ENCODE measurements at regions of chr15 and their contacts with region 1.

Region 1: GRCh38 chr15:45457641-45458433 is 64.7 kb downstream of the SLC30A4 start:
- H3K4me3 Mint-ChIP-seq: peak overlapping the region; percentile 49
- H3K27ac Mint-ChIP-seq: peak overlapping the region; percentile 78
- H3K4me1 Mint-ChIP-seq: peaks cover 48% of the 10 kb centered on the region
- H3K27me3 Mint-ChIP-seq: no peaks in the 10 kb centered on the region

Region 2: DNA sequence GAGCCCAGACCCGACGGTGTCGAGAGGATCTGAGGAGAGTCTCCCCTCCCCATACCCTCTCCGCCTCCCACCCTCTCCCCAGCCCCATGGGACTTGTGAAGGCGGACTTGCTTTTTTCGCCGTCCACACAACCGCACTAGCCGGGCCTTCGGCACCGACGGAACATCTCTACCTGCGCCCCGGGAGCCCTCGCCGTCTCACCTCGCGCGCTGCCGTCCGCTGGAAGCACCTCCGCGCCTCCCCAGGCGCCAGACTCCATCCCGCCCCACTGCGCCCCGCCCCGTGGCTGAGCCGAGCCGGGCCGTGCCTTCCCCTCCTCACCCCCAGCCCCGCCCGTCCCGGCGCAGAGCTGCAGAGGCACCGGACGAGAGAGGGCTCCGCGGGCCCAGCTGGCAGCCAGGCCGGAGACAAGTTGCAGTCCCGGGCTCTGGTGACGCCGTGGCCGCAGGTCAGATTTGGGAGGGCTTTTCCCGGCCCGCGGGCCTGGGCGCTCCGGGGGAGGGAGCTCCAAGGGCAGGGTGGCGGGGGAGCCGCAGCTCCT is 328.1 kb before region 1 on chr15 and contains the starts of genes DUOX1 and DUOXA1:
- intact Hi-C with region 1: no loop called
- H3K4me3 Mint-ChIP-seq: peak within 1 kb of the TSS; percentile 77
- H3K27ac Mint-ChIP-seq: peak within 1 kb of the TSS; percentile 52
- H3K4me1 Mint-ChIP-seq: peaks cover 27% of the 10 kb centered on the region
- H3K27me3 Mint-ChIP-seq: peaks cover 89% of the 10 kb centered on the region

Region 3: DNA sequence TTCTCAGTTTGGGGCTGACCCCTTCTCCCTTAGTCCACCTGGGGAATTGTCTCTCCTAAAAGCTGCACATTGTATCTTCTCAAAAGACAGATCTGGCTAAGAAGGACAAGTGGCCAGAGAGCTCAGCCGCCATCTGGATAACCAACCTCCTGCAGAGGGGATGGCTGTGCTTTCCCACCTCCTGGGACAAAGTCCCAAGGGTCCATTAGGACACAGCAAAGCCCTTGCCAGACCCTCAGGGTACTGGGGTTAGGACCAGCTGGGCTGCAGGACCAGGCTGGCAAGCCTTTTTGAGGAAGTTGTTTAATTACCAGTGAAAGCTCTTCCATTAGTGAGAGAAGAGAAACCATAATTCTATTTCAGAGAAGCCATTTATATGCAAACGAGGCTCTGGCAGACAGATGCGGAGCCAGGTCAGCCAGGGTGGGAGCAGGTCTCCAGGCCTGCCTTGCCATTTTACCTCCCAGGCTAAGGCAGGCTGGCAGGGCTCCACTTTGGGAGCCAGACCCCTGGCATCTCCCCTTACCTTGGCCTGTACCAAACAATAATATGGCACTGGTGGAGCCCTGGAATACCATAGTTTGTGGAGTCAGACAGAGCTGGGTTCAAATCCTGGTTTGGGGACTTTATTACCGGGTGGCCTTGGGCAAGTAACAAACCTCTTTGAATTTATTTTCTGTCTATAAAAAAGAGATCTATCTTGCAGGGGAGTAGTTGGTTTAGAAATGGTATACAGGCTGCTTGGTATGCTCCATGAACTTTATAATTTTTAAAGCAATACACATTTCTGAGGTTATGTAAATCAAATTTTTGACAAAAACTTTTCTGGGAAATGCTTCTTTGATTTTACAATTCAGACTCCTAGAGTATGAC is 288.0 kb before region 1 on chr15:
- intact Hi-C with region 1: no loop called
- H3K4me3 Mint-ChIP-seq: no peak overlapping the region
- H3K27ac Mint-ChIP-seq: peak overlapping the region; percentile 85
- H3K4me1 Mint-ChIP-seq: peaks cover 41% of the 10 kb centered on the region
- H3K27me3 Mint-ChIP-seq: peaks cover 1% of the 10 kb centered on the region

Region 4: GRCh38 chr15:45402162-45402954 is 55.5 kb before region 1 on chr15:
- intact Hi-C with region 1: loop called (anchors 1 kb)
- H3K4me3 Mint-ChIP-seq: peak overlapping the region; percentile 95
- H3K27ac Mint-ChIP-seq: peak overlapping the region; percentile 92
- H3K4me1 Mint-ChIP-seq: peaks cover 35% of the 10 kb centered on the region
- H3K27me3 Mint-ChIP-seq: no peaks in the 10 kb centered on the region

Region 5: DNA sequence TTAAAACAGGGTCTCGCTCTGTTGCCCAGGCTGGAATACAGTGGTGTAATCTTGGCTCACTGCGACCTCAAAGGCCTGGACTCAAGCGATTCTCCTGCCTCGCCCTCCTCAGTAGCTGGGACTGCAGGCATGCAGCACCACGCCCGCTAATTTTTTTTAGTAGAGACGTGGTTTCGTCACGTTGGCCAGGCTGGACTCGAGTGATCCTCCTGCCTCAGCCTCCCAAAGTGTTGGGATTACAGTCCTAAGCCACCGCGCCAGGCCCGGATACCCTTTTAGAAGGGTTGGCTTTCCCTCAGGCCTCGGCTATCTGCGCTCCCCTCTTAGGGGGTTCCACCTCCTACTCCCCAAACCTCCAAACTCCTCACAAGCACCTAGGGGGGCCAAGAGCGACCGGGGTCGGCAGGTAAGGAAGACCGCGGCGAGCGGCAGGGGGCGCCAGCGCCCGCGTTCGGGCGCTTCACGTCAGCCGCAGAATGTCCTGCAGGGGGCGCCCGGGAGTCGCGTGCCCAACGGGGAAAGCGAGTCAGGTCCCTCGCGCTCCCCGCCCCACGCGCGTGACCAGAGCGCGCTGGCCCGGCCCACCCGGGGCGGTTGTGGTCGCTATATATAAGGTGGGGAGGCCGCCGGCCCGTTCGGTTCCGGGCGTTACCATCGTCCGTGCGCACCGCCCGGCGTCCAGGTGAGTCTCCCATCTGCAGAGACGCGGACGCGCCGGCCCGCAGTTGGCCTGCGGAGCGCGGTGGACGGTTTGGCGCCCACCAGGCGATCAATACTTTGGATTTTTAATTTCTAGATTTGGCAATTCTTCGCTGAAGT is 27.7 kb before region 1 on chr15:
- intact Hi-C with region 1: loop called (anchors 1 kb)
- H3K4me3 Mint-ChIP-seq: peak overlapping the region; percentile 69
- H3K27ac Mint-ChIP-seq: peak overlapping the region; percentile 20
- H3K4me1 Mint-ChIP-seq: peaks cover 14% of the 10 kb centered on the region
- H3K27me3 Mint-ChIP-seq: peaks cover 3% of the 10 kb centered on the region

Region 6: DNA sequence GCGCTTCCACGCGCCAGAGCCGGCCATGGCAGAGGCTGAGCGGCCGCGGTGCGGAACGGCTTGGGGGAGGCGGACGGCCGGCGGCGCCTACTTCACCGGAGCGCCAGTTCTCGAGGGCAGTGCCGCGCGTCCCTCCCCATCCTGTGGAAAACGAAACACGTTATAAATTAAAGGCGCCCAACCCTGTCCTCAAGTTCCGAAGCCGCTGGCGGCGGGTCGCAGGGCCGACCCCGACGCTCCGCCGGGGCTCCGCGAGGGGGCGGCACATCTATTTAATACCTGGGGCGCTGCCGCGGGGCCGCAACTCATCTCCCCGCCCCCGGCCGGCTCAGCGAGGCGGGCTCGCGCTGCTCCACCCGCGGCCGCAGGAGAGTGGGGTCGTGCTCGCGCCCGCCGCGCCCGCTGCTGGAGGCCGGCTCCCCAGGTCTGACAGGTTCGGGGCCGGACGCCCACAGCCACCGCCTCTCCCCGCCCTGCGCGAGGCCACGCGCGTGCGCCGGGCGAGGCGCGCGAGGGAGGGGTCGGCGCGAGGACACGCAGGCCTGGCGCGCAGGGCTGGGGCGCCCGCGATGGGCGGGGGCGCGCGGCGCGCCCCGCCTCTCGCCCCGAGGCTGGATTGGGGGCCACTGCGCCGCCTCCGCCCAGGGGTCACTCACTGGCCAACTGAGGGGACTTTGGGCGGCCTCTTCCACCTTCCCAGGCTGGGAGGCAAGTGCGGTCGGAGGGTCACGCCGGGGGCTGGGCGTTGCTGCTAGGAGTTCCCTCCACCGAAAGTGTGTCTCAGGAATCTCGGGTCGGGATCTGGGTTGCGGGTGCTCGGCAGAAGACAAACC is 64.7 kb after region 1 on chr15 and contains the start of gene SLC30A4:
- intact Hi-C with region 1: loop called (anchors 2 kb)
- H3K4me3 Mint-ChIP-seq: peak within 1 kb of the TSS; percentile 87
- H3K27ac Mint-ChIP-seq: peak within 1 kb of the TSS; percentile 83
- H3K4me1 Mint-ChIP-seq: peaks cover 68% of the 10 kb centered on the region
- H3K27me3 Mint-ChIP-seq: peaks cover 46% of the 10 kb centered on the region

Region 7: GRCh38 chr15:45573961-45574629 is 116.3 kb after region 1 on chr15:
- intact Hi-C with region 1: no loop called
- H3K4me3 Mint-ChIP-seq: no peak overlapping the region
- H3K27ac Mint-ChIP-seq: peak overlapping the region; percentile 48
- H3K4me1 Mint-ChIP-seq: peaks cover 23% of the 10 kb centered on the region
- H3K27me3 Mint-ChIP-seq: peaks cover 23% of the 10 kb centered on the region

Region 8: DNA sequence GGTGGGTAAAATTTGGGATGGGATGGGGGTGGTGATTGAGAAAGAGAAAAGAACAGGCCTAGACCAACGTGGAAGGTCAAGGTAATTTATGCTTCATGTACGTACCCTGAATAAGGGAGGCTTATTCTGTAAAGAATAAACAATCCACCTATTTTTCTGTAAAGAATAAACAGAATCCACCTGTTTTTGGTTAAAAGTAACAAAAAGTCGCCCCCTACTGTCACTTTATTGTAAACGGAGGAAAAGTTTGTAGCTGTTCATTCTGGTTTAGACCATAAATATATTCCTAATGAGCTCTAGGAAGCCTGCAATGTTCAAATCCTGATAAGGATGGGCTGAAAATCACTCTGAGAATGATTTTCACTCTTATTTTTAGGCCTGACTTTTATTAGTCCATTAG is 153.5 kb after region 1 on chr15:
- intact Hi-C with region 1: loop called (anchors 1 kb)
- H3K4me3 Mint-ChIP-seq: no peak overlapping the region
- H3K27ac Mint-ChIP-seq: peak overlapping the region; percentile 34
- H3K4me1 Mint-ChIP-seq: peaks cover 38% of the 10 kb centered on the region
- H3K27me3 Mint-ChIP-seq: no peaks in the 10 kb centered on the region